Colonic mucosa (tissue), 4 donors: ENCODE measurements at regions of chr14 and their contacts with region 1.

Region 1: GRCh38 chr14:102516531-102517415 is 7.2 kb upstream of the ANKRD9 start:
- DNase-seq: peak; percentile 71
- H3K4me3 ChIP-seq: peak overlapping the region; percentile 72
- H3K27ac ChIP-seq: peak overlapping the region; percentile 67
- H3K4me1 ChIP-seq: no peaks in the 10 kb centered on the region
- H3K27me3 ChIP-seq: no peaks in the 10 kb centered on the region
- CTCF ChIP-seq: peak; percentile 67

Region 2: GRCh38 chr14:102362545-102363181 is 154.1 kb before region 1 on chr14 and contains the starts of genes CINP and TECPR2:
- intact Hi-C with region 1: no loop called
- DNase-seq: peak; percentile 100
- H3K4me3 ChIP-seq: peak within 1 kb of the TSS; percentile 95
- H3K27ac ChIP-seq: peak within 1 kb of the TSS; percentile 81
- H3K4me1 ChIP-seq: peaks cover 5% of the 10 kb centered on the region
- H3K27me3 ChIP-seq: no peaks in the 10 kb centered on the region
- CTCF ChIP-seq: no peak
- total RNA-seq, gene CINP: 29.5 to 43.2 TPM
- total RNA-seq, gene TECPR2: 16.5 to 18.2 TPM

Region 3: DNA sequence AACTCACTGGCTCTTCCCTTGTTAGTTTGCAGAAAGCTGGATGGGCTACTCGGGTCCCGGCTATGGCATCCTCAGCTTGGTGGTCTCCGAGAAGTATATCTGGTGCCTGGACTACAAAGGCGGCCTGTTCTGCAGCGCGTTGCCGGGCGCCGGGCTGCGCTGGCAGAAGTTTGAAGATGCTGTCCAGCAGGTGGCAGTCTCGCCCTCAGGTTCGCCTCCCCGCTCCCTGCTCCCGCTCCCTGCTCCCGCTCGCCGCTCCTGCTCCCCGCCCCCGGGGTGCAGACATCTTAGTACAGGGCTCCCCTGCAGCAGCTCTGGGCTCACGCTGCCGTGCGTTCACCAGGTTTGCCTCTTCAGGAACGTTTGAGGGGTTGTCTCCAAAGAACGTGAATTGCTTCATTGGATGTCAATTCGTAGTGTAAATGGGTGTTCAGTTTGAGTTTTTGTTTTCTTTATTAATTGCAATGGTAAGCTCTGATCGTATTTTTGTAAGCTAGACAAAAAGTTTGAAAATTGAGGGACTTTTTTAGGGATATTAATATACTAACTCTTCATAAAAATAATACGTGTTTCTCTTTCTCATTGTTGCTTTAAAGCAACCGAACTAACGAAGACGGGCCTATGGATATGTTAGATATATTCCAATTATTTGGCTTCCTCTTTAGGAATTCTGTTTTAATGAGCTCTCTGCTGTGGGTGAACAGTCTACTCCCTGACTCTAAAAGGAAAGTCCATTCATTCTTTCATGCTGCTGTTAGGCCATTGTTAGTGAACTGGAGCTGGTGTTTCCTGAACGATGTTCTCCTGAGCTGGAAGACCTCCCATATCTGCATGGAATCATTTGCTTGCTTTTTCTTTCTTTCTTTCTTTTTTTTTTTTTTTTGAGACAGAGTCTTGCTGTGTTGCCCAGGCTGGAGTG is 78.5 kb before region 1 on chr14:
- intact Hi-C with region 1: loop called (anchors 2 kb)
- DNase-seq: peak; percentile 92
- H3K4me3 ChIP-seq: no peak overlapping the region
- H3K27ac ChIP-seq: no peak overlapping the region
- H3K4me1 ChIP-seq: peaks cover 11% of the 10 kb centered on the region
- H3K27me3 ChIP-seq: no peaks in the 10 kb centered on the region
- CTCF ChIP-seq: peak; percentile 78